ENCODE measurements at regions of chr9 and their contacts with region 1.

Region 1: GRCh38 chr9:100426530-100427428 is at the start of gene MSANTD3:
- DNase-seq: peak; percentile 77
- ATAC-seq: peak; percentile 85
- total RNA-seq, gene MSANTD3: 18.6 TPM

Region 2: DNA sequence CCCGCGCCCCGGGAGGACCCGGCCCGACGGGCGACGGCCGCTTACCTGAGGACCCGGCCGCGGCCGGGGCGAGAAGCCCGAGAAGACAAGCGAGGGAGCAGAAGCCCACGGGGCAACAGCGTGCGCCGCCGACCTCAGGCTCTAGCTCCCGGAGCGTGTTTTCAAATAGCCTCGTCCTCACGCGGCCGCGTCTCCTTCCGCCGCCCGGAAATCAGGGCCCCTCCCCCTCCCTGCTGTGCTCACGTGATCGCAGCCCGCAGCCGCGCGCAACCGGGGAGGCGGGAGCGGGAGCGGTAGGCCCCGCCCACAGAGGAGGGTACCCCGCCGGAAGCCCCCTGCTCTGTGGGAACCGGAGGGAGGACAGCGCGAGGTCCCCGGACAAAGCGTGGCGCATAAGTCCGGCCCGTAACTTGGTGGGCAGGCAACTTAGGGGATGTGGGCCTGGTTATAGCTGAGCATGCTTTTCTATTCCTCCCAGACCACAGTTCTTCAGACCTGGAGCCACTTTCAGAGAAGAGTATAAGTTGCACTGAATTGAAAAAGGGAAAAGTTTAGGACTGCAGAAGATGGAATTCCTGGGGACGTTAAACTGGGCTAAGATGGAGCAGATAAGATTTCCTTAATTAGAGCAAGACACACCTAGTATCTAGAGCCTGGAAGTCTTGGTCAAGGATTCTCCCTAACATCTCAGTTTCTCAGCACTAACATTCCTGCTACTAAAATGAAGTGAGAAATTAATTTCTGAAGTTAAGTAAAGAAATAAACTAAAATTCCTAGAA is 73.9 kb before region 1 on chr9 and contains the start of gene TEX10:
- intact Hi-C with region 1: loop called (anchors 5 kb)
- DNase-seq: peak; percentile 96
- ATAC-seq: peak; percentile 98
- total RNA-seq, gene TEX10: 7.5 TPM

Measured in Right ventricle myocardium inferior (tissue), 1 donor.